ENCODE measurements at regions of chr12 and their contacts with region 1.

Region 1: DNA sequence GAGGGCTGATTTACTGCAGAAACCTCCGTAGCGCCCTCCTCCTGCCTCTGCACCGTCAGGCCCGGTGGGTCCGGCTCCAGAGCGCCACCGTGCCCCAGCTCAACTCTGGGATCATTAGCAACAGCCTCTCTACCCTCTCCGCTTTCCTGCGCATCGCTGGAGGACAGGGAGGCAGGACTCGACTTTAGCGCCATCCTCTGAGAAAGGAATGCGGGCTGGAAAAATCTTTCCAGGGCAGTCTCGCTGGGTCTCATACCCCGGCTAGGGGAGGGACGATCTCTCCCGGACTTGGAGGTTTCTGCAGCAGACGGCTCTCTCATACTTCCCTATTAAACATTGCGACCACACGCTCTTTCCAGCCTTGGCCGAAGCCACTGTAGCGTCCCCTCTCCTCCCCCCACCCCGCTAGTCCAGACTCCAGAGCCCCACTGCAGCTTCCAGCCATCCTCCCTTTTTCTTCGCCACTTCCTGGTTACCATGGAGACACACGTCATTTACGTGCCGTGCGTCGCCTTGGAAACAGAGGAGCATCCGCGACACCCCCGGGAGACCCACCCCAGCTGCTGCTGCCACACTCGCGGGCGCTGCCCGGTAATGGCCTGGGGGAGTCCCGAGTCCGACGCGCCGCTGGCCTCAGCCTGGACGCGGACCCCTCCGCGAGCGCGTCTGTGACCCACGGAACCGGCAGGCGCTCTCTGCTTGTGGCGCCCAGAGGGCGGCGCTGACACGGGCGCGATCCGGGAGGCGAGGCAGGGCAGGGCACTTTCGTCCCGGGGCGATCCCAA is at the start of gene CCDC184:
- DNase-seq: peak; percentile 86 to 88 (median 88)
- H3K4me3 ChIP-seq: peak within 1 kb of the TSS; percentile 52 to 99
- H3K4me3 Mint-ChIP-seq: peak within 1 kb of the TSS; percentile 91 to 99 (median 95)
- H3K27ac ChIP-seq: peak within 1 kb of the TSS; percentile 61
- H3K27ac Mint-ChIP-seq: peak within 1 kb of the TSS; percentile 87 to 98 (median 96)
- H3K4me1 ChIP-seq: peaks cover 15% of the 10 kb centered on the region
- H3K4me1 Mint-ChIP-seq: peaks cover 4 to 25% (median 10%) of the 10 kb centered on the region in 4 donors
- H3K27me3 ChIP-seq: no peaks in the 10 kb centered on the region
- H3K27me3 Mint-ChIP-seq: peaks cover 12 to 14% of the 10 kb centered on the region in 2 donors
- total RNA-seq, gene CCDC184: 0.42 to 0.47 TPM

Region 2: DNA sequence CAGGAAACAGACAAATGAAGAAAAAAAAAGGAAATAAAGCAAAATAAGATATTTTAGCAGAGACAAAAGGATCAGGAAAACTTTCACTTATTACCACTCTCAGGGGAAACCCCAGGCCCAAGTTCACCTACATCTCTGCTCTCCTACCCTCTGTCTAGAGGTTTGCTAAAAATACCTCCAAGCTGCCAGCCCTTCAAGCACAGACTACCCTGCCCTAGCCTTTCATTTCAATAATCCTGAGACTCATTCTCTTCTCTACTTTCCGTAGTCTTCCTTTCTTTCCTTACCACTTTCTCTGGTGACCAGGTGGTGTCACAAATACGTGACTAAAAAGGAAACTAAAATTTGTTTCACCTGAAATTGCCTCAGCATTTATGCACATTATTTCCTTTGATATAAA is 511.2 kb before region 1 on chr12:
- CTCF ChIA-PET with region 1: no interaction called
- POLR2A ChIA-PET with region 1: no interaction called
- intact Hi-C with region 1: no loop called
- DNase-seq: no peak
- H3K4me3 ChIP-seq: no peak overlapping the region
- H3K4me3 Mint-ChIP-seq: no peak overlapping the region
- H3K27ac ChIP-seq: no peak overlapping the region
- H3K27ac Mint-ChIP-seq: peak overlapping the region in 4 of 7 donors; percentile 14 to 54 (median 44)
- H3K4me1 ChIP-seq: no peaks in the 10 kb centered on the region
- H3K4me1 Mint-ChIP-seq: peaks cover 9 to 21% (median 13%) of the 10 kb centered on the region in 4 donors
- H3K27me3 ChIP-seq: no peaks in the 10 kb centered on the region
- H3K27me3 Mint-ChIP-seq: no peaks in the 10 kb centered on the region

Region 3: GRCh38 chr12:48105862-48106680 is 77.2 kb before region 1 on chr12 and contains the start of gene SENP1:
- CTCF ChIA-PET with region 1: interaction called, 6 read pairs
- POLR2A ChIA-PET with region 1: interaction called, 15 read pairs
- intact Hi-C with region 1: no loop called
- DNase-seq: peak; percentile 91 to 93 (median 92)
- H3K4me3 ChIP-seq: peak within 1 kb of the TSS; percentile 84 to 93
- H3K4me3 Mint-ChIP-seq: peak within 1 kb of the TSS; percentile 89 to 97 (median 92)
- H3K27ac ChIP-seq: peak within 1 kb of the TSS; percentile 96
- H3K27ac Mint-ChIP-seq: peak within 1 kb of the TSS; percentile 93 to 100 (median 99)
- H3K4me1 ChIP-seq: peaks cover 42% of the 10 kb centered on the region
- H3K4me1 Mint-ChIP-seq: peaks cover 42 to 65% (median 52%) of the 10 kb centered on the region in 4 donors
- H3K27me3 ChIP-seq: no peaks in the 10 kb centered on the region
- H3K27me3 Mint-ChIP-seq: no peaks in the 10 kb centered on the region
- total RNA-seq, gene SENP1: 28.7 to 35.1 TPM

Region 4: DNA sequence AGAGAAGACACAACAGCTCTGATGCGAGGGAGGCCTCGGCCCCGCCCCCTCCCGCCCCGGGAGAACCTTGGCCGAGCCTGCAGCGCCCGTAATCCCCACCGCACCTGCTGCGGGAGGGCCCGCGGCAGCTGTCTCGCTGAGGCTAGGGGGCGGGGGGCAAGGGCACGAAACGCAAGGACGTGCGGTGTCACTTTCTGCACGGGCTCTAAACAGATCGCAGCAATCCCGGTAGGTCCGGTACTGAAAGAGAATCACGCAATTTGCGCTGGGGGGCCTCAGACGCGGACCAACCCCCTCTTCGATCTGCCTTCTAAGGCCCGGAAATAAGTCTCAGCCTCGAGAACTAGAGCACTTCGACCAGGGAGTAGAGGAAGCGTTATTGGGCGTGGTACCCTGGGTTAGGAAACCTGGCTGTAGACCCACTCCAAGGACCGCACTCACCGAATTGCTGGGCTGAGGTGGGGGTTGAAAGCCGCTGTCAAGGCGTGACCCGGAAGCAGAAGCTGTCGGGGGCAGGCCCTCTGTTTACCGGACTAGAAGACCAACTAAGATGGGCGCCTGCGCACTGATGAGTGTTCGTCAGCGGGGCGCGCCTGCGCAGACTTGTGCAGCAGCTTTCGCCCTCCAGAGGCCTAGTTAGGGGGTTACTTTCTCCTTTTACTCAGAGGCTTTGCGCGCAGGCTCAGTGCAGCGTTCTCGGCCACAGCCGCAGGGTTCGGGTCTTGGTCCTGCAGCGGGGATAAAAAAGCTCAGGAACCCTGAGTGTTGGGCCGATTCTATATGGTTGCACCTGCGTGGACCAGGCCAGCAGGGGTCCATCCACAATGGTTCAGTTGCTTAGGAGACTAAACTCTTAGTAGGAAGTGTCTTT is 26.0 kb before region 1 on chr12 and contains the start of gene ASB8:
- CTCF ChIA-PET with region 1: interaction called, 21 read pairs
- POLR2A ChIA-PET with region 1: interaction called, 22 read pairs
- intact Hi-C with region 1: loop called (anchors 1 kb)
- DNase-seq: peak; percentile 98 to 99 (median 98)
- H3K4me3 ChIP-seq: peak within 1 kb of the TSS; percentile 76 to 84
- H3K4me3 Mint-ChIP-seq: peak within 1 kb of the TSS; percentile 94 to 98 (median 97)
- H3K27ac ChIP-seq: peak within 1 kb of the TSS; percentile 81
- H3K27ac Mint-ChIP-seq: peak within 1 kb of the TSS; percentile 96 to 99 (median 99)
- H3K4me1 ChIP-seq: peaks cover 23% of the 10 kb centered on the region
- H3K4me1 Mint-ChIP-seq: peaks cover 16 to 49% (median 35%) of the 10 kb centered on the region in 4 donors
- H3K27me3 ChIP-seq: no peaks in the 10 kb centered on the region
- H3K27me3 Mint-ChIP-seq: no peaks in the 10 kb centered on the region
- total RNA-seq, gene ASB8: 61.0 to 64.6 TPM

Region 5: DNA sequence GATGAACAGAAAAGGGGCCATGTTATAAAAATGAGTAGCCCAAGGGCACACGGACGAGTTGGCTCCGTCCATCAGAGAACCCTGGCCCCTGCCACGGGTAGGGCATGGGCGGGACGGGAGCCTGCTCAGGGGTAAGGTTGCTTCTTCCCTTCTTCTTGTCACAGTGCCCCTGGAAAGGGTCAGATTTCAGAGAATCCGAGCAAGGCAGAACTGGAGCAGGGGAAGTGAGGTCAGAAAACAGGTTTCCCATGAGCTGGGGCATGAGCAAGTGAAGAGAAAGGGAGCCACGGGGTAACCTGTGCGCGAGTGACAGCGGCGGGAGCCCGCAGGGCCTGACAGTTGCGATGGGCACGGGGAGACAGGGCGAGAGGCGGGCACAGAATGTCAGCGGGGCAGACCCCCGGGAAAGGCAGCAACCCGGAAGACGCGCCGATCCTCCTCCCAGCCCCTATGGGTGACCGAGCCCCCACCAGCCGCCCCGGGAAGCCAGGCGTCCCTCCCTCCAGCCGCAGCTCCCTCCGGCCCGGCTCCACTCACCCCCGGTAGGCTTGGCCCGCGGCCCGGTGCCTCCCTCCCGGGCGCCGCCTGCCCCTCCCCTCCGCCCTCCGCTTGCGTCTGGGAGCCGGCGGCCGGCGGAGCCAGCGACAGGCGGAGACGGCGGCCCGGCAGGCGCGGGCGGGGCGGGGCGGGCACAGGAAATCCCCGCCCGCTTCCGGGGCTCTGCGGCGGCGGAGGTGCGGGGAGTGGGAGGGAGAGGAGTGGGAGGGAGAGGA is 167.2 kb after region 1 on chr12 and contains the start of gene ZNF641:
- CTCF ChIA-PET with region 1: interaction called, 3 read pairs
- POLR2A ChIA-PET with region 1: no interaction called
- intact Hi-C with region 1: loop called (anchors 5 kb)
- DNase-seq: peak; percentile 81 to 86 (median 85)
- H3K4me3 ChIP-seq: peak within 1 kb of the TSS; percentile 57 to 72
- H3K4me3 Mint-ChIP-seq: peak within 1 kb of the TSS; percentile 92 to 97 (median 96)
- H3K27ac ChIP-seq: peak within 1 kb of the TSS; percentile 87
- H3K27ac Mint-ChIP-seq: peak within 1 kb of the TSS; percentile 93 to 98 (median 96)
- H3K4me1 ChIP-seq: peaks cover 40% of the 10 kb centered on the region
- H3K4me1 Mint-ChIP-seq: peaks cover 21 to 44% (median 35%) of the 10 kb centered on the region in 4 donors
- H3K27me3 ChIP-seq: no peaks in the 10 kb centered on the region
- H3K27me3 Mint-ChIP-seq: no peaks in the 10 kb centered on the region
- total RNA-seq, gene ZNF641: 39.9 to 41.2 TPM

Region 6: GRCh38 chr12:48454667-48455066 is 271.4 kb after region 1 on chr12:
- CTCF ChIA-PET with region 1: interaction called, 3 read pairs
- POLR2A ChIA-PET with region 1: no interaction called
- intact Hi-C with region 1: loop called (anchors 1 kb)
- DNase-seq: peak in 4 of 5 donors; percentile 18 to 39 (median 33)
- H3K4me3 ChIP-seq: no peak overlapping the region
- H3K4me3 Mint-ChIP-seq: no peak overlapping the region
- H3K27ac ChIP-seq: no peak overlapping the region
- H3K27ac Mint-ChIP-seq: no peak overlapping the region
- H3K4me1 ChIP-seq: no peaks in the 10 kb centered on the region
- H3K4me1 Mint-ChIP-seq: no peaks in the 10 kb centered on the region
- H3K27me3 ChIP-seq: no peaks in the 10 kb centered on the region
- H3K27me3 Mint-ChIP-seq: peaks cover 20% of the 10 kb centered on the region in 2 donors